Caco-2 (cell line): ENCODE measurements at regions of chr2 and their contacts with region 1.

Region 1: DNA sequence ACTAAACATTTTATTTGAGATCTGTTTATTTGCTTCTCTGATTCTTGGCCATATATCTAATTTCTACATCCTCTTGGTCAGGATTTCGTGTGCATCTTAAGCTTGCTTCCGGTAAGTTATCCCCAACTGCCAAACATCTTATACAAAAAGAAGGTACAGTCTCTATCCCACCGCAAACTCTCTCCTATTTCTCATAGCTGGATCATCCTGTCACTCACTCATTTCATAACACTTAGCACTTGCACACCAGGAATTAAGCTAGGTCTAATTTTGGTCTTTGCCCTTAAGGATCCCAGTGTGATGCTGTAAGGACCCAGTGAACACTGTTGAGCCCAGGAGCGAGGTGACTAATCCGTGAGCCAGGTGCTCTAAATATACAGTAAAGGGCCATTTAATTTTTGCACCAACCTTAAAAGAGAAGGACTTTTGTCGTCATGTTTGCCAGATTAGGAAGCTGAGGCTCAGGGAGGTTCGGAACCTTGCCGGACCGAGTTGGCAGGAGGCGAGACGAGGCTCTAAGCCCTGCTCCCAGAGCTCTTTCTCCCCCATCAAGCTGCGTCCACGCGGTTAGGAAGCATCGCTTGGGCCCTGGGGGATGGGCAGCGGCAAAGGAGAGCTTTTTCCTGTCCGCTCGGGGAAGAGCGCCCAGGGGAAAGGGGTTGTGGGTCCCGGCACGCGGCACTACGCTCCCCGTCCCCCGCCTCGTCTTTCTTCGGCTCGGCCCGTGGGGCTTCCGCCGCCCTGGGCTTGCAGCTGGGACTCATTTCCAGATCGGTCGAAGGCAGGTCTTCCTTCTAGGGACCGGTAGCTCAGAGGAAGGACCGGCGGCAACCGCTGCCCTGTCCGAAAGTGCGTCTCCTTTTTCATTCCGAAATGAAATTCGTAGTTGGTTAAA is 4.1 kb upstream of the ITPRIPL1 start:
- DNase-seq: peak in 1 of 2 experiments; percentile 32
- H3K4me3 ChIP-seq: peak overlapping the region; percentile 39
- H3K4me3 Mint-ChIP-seq: peak overlapping the region; percentile 80
- H3K27ac Mint-ChIP-seq: no peak overlapping the region
- H3K4me1 ChIP-seq: peaks cover 13% of the 10 kb centered on the region; the same call in 1 of the 2 replicates
- H3K4me1 Mint-ChIP-seq: no peaks in the 10 kb centered on the region
- H3K27me3 ChIP-seq: peaks cover 2% of the 10 kb centered on the region; the same call in 1 of the 2 replicates
- H3K27me3 Mint-ChIP-seq: peaks cover 13% of the 10 kb centered on the region
- CTCF ChIP-seq: no peak

Region 2: DNA sequence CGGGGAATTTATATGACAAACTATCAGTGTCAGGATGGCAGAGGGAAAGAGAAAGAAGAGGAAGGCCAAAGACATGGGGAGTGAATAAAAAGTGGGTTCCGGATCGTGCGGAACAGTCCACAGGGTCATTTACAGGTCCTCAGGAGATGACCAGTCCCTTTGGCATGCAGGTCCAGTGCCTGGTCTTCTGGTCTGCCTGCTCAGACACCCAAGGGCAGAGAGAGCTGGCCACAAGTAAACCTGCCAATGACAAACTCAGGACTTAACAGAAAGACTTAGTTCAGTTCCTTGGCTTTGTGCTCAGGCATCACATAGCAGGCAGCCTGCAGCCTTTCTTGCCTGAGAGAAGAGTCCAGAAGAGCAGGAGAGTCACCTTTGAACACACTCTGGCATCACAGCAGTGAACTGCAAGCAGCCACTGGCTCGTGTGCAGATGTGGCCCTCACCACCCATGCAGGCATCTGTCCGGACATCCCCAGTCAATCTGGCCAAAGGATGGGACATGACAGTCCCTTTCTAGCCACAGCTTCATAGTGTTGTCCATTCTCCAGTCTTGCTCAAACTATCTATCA is 69.2 kb before region 1 on chr2:
- CTCF ChIA-PET with region 1: no interaction called
- POLR2A ChIA-PET with region 1: no interaction called
- intact Hi-C with region 1: no loop called
- DNase-seq: peak; percentile 65 to 83
- H3K4me3 ChIP-seq: no peak overlapping the region
- H3K4me3 Mint-ChIP-seq: no peak overlapping the region
- H3K27ac Mint-ChIP-seq: peak overlapping the region; percentile 10
- H3K4me1 ChIP-seq: no peaks in the 10 kb centered on the region; the same call in 1 of the 2 replicates
- H3K4me1 Mint-ChIP-seq: no peaks in the 10 kb centered on the region
- H3K27me3 ChIP-seq: no peaks in the 10 kb centered on the region
- H3K27me3 Mint-ChIP-seq: no peaks in the 10 kb centered on the region
- CTCF ChIP-seq: no peak

Region 3: DNA sequence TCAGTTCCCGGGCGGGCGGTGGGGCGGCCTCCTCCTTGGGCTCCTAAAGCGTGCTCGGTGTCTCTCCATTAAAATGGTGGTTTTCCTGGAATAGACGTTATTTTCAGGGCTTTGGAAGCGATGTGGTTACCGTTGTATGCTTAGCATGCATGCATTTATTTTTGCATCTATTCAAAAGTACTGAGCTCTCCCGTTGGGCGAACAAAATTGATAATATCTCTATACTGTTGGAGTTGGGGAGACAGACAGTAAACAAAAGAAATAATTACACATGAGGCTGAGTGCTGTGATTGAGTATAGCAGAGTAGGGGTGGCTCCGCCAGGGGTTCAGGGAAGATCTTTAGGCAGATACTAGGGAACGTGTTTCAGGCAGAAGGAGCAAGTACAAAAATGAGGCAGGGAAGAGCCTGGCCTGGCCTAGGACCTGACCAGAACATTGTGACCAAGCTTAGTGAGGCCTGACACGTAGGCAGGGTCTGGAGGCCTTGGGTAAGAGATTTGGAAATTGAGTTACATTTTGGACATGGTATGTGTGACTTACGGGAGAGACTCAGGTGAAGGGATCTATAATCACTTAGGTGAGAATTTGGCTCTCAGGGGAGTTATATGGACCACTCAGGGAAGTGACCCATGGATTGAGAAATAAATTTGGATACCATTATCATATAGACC is 15.3 kb after region 1 on chr2:
- CTCF ChIA-PET with region 1: no interaction called
- POLR2A ChIA-PET with region 1: interaction called, 14 read pairs
- intact Hi-C with region 1: no loop called
- DNase-seq: no peak
- H3K4me3 ChIP-seq: peak overlapping the region; percentile 94
- H3K4me3 Mint-ChIP-seq: peak overlapping the region; percentile 78
- H3K27ac Mint-ChIP-seq: peak overlapping the region; percentile 53
- H3K4me1 ChIP-seq: peaks cover 10% of the 10 kb centered on the region; the same call in 1 of the 2 replicates
- H3K4me1 Mint-ChIP-seq: peaks cover 28% of the 10 kb centered on the region
- H3K27me3 ChIP-seq: no peaks in the 10 kb centered on the region
- H3K27me3 Mint-ChIP-seq: no peaks in the 10 kb centered on the region
- CTCF ChIP-seq: no peak

Region 4: DNA sequence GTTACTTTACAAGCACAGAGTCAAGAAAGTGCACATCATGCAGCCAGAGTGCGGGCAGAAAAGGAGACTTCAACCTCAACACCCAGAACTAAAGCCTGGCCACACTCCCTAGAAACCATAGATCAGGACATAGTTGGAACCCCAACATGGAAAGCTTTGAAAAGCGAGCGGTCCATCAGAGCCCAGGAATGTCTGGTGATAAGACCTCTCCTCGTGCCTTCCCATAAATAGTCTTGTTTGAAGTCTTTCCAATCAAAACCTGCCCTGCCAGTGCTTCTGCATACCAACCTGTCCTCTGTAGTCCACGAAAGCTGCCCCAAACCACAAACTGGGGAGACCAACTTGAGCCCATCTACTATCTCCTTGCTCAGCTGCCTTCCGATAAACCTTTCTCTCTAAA is 128.7 kb after region 1 on chr2:
- CTCF ChIA-PET with region 1: no interaction called
- POLR2A ChIA-PET with region 1: no interaction called
- intact Hi-C with region 1: no loop called
- DNase-seq: peak; percentile 70 to 79
- H3K4me3 ChIP-seq: no peak overlapping the region
- H3K4me3 Mint-ChIP-seq: peak overlapping the region; percentile 20
- H3K27ac Mint-ChIP-seq: peak overlapping the region; percentile 79
- H3K4me1 ChIP-seq: peaks cover 26% of the 10 kb centered on the region
- H3K4me1 Mint-ChIP-seq: peaks cover 20% of the 10 kb centered on the region
- H3K27me3 ChIP-seq: no peaks in the 10 kb centered on the region
- H3K27me3 Mint-ChIP-seq: no peaks in the 10 kb centered on the region
- CTCF ChIP-seq: no peak